Caco-2 (cell line): ENCODE measurements at regions of chr19 and their contacts with region 1.

Region 1: GRCh38 chr19:43950834-43951645 is at the start of gene ZNF221:
- DNase-seq: peak; percentile 94 to 95
- H3K4me3 ChIP-seq: peak within 1 kb of the TSS; percentile 58
- H3K4me3 Mint-ChIP-seq: peak within 1 kb of the TSS; percentile 100
- H3K27ac Mint-ChIP-seq: peak within 1 kb of the TSS; percentile 93
- H3K4me1 ChIP-seq: no peaks in the 10 kb centered on the region
- H3K4me1 Mint-ChIP-seq: no peaks in the 10 kb centered on the region
- H3K27me3 ChIP-seq: no peaks in the 10 kb centered on the region
- H3K27me3 Mint-ChIP-seq: peaks cover 11% of the 10 kb centered on the region
- CTCF ChIP-seq: peak; percentile 19 to 35
- total RNA-seq, gene ZNF221: 4.3 and 6.2 TPM in 2 replicates

Region 2: GRCh38 chr19:43901395-43902390 is 49.3 kb before region 1 on chr19:
- CTCF ChIA-PET with region 1: interaction called, 4 read pairs
- POLR2A ChIA-PET with region 1: no interaction called
- intact Hi-C with region 1: loop called (anchors 1 kb)
- DNase-seq: peak; percentile 82 to 87
- H3K4me3 ChIP-seq: peak overlapping the region; percentile 70
- H3K4me3 Mint-ChIP-seq: peak overlapping the region; percentile 93
- H3K27ac Mint-ChIP-seq: peak overlapping the region; percentile 67
- H3K4me1 ChIP-seq: no peaks in the 10 kb centered on the region
- H3K4me1 Mint-ChIP-seq: no peaks in the 10 kb centered on the region
- H3K27me3 ChIP-seq: no peaks in the 10 kb centered on the region
- H3K27me3 Mint-ChIP-seq: no peaks in the 10 kb centered on the region
- CTCF ChIP-seq: no peak

Region 3: DNA sequence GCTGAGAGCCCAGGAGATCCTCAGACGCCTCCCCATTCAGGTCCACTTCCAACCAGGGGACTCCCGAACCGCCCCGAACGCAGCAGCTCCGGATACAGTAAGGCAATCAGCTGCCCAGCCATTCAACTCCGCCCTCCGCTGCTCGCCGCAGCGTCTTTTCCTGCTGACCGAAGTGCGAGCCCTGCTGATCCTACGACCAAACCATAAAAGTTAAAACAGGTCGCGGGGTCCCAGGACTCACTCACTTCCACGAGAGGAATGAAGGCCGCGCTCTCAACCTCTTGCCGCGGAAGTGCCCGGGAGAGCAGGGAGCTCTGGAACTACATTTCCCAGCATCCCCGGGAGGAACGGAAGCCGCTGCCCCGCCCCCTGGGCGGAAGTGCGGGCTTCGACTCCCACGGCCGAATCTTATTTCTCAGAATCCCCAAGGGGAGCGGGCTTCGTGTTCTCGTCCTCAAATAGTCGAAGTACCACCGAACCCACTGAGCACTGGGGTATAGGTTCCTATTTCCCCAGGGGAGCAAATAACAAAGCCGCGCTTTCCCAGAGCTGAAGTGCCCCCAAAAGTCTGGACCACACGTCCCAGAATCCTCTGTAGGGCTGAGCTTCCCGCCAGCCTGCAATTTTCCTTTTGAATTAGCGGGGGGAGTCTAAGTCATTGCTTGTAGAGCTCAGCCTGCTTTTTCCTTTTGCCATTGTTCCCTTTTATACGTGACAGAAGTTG is 15.9 kb before region 1 on chr19 and contains the start of gene ZNF45:
- CTCF ChIA-PET with region 1: interaction called, 6 read pairs
- POLR2A ChIA-PET with region 1: interaction called, 10 read pairs
- intact Hi-C with region 1: loop called (anchors 1 kb)
- DNase-seq: peak; percentile 90 to 92
- H3K4me3 ChIP-seq: peak within 1 kb of the TSS; percentile 52
- H3K4me3 Mint-ChIP-seq: peak within 1 kb of the TSS; percentile 94
- H3K27ac Mint-ChIP-seq: peak within 1 kb of the TSS; percentile 88
- H3K4me1 ChIP-seq: peaks cover 5% of the 10 kb centered on the region; the same call in 1 of the 2 replicates
- H3K4me1 Mint-ChIP-seq: peaks cover 11% of the 10 kb centered on the region
- H3K27me3 ChIP-seq: no peaks in the 10 kb centered on the region
- H3K27me3 Mint-ChIP-seq: peaks cover under 1% of the 10 kb centered on the region
- CTCF ChIP-seq: no peak
- total RNA-seq, gene ZNF45: 14.8 and 14.9 TPM in 2 replicates

Region 4: DNA sequence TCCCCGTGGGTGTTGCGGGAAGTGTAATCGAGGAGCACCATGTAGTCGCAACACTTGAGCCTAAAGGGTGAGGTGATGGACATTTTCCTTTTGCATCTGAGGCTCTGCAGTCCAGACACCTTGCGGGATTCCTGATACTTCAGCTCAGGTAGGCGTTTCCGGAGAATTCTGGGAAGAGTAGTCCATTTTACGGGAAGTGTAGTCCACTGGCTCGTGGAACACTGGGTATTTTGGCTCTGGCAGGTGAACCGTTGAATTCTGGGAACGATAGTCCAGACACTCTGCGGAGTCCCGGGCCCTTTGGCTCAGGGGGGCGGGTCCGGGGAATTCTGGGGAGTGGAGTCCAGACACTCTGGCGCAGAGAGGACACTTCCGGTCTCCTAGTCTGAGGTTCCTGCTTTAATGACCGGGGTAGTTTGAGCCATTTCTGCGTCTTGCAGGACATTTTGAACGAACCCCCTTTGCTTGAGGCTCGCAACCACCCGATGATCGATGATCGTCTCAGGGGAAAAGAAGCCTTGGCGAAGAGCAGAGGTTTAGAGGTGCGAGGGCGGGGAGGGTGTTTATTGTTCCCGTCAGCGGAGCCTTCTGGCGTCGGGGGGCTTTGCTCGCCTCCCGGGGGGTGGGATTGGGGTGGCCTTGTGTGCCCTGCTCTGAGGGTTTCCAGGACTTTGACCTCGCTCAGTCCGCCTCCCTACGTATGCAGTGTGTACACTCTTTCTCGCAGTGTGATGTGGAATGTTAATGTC is 100.8 kb after region 1 on chr19 and contains the start of gene ZNF223:
- CTCF ChIA-PET with region 1: no interaction called
- POLR2A ChIA-PET with region 1: no interaction called
- intact Hi-C with region 1: loop called (anchors 10 kb)
- DNase-seq: peak; percentile 98
- H3K4me3 ChIP-seq: peak within 1 kb of the TSS; percentile 69
- H3K4me3 Mint-ChIP-seq: peak within 1 kb of the TSS; percentile 74
- H3K27ac Mint-ChIP-seq: peak within 1 kb of the TSS; percentile 85
- H3K4me1 ChIP-seq: peaks cover 7% of the 10 kb centered on the region
- H3K4me1 Mint-ChIP-seq: peaks cover 30% of the 10 kb centered on the region
- H3K27me3 ChIP-seq: no peaks in the 10 kb centered on the region
- H3K27me3 Mint-ChIP-seq: no peaks in the 10 kb centered on the region
- CTCF ChIP-seq: no peak
- total RNA-seq, gene ZNF223: 9.9 and 11.3 TPM in 2 replicates

Region 5: DNA sequence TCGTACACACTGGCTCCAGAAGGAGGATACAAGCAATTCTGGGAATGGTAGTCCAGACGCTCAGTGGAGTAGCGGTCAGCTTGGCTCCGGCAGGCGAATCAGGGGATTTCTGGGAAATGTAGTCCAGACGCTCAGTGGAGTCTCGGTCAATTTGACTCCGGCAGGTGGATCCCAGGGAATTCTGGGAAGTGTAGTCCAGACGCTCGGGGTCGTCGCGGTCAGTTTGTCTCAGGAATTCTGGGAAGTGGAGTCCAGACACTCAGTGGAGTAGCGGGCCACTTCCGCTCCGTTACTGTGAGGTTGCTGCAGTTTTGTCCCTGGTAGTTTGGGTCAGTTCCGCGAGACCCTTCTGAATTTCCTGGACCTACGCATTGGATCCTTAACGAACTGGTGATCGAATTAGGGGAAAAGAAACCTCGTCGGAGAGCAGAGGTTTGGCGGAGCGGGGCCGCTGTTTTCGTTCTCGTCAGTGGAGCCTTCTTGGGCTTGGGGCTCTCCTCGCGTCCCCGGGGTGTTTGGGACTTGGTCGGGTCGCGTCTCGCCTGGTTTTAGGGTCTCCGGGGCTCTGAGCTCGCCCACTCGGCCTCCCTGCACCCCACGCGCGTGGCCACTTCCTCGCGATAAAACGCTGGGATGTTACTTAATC is 162.2 kb after region 1 on chr19 and contains the start of gene ZNF225:
- CTCF ChIA-PET with region 1: no interaction called
- POLR2A ChIA-PET with region 1: no interaction called
- intact Hi-C with region 1: no loop called
- DNase-seq: peak; percentile 96 to 98
- H3K4me3 ChIP-seq: peak within 1 kb of the TSS; percentile 88
- H3K4me3 Mint-ChIP-seq: peak within 1 kb of the TSS; percentile 91
- H3K27ac Mint-ChIP-seq: peak within 1 kb of the TSS; percentile 75
- H3K4me1 ChIP-seq: no peaks in the 10 kb centered on the region
- H3K4me1 Mint-ChIP-seq: peaks cover 7% of the 10 kb centered on the region
- H3K27me3 ChIP-seq: no peaks in the 10 kb centered on the region
- H3K27me3 Mint-ChIP-seq: no peaks in the 10 kb centered on the region
- CTCF ChIP-seq: no peak
- total RNA-seq, gene ZNF225: 4.3 and 4.8 TPM in 2 replicates